Activated T-helper 2 cell treated with anti-CD3 and anti-CD28 coated beads, Interferon-gamma antibody, Interleukin-2, Interleukin-4, amounts not matched to agents 10 μg/mL and 5 μg/mL and 100 μg/mL, durations not matched to agents 14 hours and 24 hours and 36 hours (primary cell): ENCODE measurements at regions of chr3 and their contacts with region 1.

Region 1: DNA sequence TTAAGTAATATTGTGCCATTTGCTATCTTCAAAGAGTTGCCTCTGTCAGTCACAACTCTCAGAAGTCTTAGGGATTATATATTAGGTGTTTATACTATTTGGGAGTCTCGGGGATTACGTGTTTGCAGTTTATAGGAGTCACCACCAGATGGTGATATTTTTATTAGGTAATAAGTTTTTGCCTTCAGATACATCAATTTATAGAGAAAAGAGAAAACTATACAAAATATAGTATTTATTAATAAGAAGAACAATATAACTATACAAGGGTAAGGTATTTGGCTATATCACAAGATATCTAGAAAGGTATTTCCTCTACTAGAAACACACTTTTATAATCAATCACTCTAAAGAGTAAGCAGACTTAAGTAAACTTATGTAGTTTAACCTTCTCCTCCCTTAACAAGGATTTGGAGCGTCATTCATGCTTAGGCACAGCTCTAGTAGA is 10.7 kb upstream of the DHX36 start:
- DNase-seq: no peak
- H3K4me3 Mint-ChIP-seq: no peak overlapping the region
- H3K27ac Mint-ChIP-seq: no peak overlapping the region
- H3K4me1 Mint-ChIP-seq: no peaks in the 10 kb centered on the region
- H3K27me3 Mint-ChIP-seq: peaks cover 15% of the 10 kb centered on the region

Region 2: GRCh38 chr3:155323063-155323666 is 988.2 kb after region 1 on chr3:
- intact Hi-C with region 1: loop called (anchors 5 kb)
- DNase-seq: no peak
- H3K4me3 Mint-ChIP-seq: no peak overlapping the region
- H3K27ac Mint-ChIP-seq: no peak overlapping the region
- H3K4me1 Mint-ChIP-seq: no peaks in the 10 kb centered on the region
- H3K27me3 Mint-ChIP-seq: no peaks in the 10 kb centered on the region